ENCODE measurements at regions of chr1 and their contacts with region 1.

Region 1: DNA sequence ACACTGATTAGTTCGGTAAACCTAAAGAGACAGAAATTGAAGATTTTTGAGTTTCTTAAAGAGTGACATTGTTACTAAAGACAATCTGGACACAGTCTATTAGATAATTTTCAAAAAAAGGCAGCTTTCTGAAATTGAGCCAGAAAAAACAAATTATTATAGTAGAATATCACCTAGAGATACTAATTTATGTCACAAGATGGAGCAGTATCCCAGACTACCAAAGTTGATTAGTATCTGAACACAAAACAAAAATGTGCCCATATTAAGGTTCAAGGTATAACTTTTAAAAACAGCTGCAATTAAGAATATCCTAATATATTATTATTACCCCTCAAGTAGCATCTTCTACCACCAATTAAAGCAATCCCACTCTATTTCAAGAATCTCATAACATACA is 40.5 kb upstream of the SYT2 start:
- DNase-seq: no peak
- H3K4me3 ChIP-seq: no peak overlapping the region
- H3K27ac ChIP-seq: no peak overlapping the region
- H3K4me1 ChIP-seq: no peaks in the 10 kb centered on the region
- H3K27me3 ChIP-seq: no peaks in the 10 kb centered on the region
- CTCF ChIP-seq: 0 out of 2 replicates have a peak, but pooled peaks have one; percentile 16

Region 2: GRCh38 chr1:202728951-202729350 is 21.8 kb before region 1 on chr1:
- CTCF ChIA-PET with region 1: no interaction called
- POLR2A ChIA-PET with region 1: no interaction called
- intact Hi-C with region 1: no loop called
- DNase-seq: no peak
- H3K4me3 ChIP-seq: no peak overlapping the region
- H3K27ac ChIP-seq: no peak overlapping the region
- H3K4me1 ChIP-seq: no peaks in the 10 kb centered on the region
- H3K27me3 ChIP-seq: no peaks in the 10 kb centered on the region
- CTCF ChIP-seq: no peak

Region 3: GRCh38 chr1:202852163-202852904 is 101.6 kb after region 1 on chr1:
- CTCF ChIA-PET with region 1: no interaction called
- POLR2A ChIA-PET with region 1: no interaction called
- intact Hi-C with region 1: loop called (anchors 10 kb)
- DNase-seq: peak; percentile 68
- H3K4me3 ChIP-seq: no peak overlapping the region
- H3K27ac ChIP-seq: no peak overlapping the region
- H3K4me1 ChIP-seq: no peaks in the 10 kb centered on the region
- H3K27me3 ChIP-seq: no peaks in the 10 kb centered on the region
- CTCF ChIP-seq: peak; percentile 68

Measured in A673 (cell line).